A673 (cell line): ENCODE measurements at regions of chr1 and their contacts with region 1.

Region 1: DNA sequence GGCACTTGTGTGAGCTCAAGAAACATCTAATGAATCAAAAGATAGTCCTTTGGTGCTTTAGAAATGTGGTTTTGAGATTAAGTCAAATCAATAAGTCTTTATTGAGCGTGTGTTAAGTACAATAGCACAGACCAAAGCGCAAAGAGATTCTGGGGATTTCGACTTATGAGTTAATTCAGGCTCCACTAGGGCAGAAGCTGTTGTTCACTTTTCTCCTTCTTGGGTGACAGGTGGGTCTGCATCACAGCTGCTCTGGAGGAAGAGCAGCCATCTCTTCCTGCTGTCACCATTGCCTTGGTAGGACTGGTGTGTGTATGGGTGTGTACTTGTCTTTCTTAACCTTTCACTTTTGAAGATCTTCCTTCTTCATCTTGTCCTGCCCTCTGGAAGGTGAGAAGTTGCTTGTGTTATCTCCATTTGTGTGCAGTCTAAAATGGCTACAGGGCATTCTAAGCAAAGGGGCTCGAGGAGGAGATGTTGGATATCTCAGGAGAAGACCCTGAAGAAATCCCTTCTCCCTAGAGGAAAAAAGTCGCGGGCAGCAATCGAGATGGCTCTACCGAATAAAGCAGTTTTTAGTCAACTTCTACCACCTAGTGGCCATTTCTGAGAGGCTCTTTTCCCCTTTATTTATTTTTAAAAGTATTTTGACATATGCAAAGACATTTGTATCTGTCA is 22.9 kb upstream of the DISC1 start:
- DNase-seq: peak; percentile 89
- H3K4me3 ChIP-seq: peak overlapping the region; percentile 45
- H3K27ac ChIP-seq: peak overlapping the region; percentile 1
- H3K4me1 ChIP-seq: no peaks in the 10 kb centered on the region
- H3K27me3 ChIP-seq: no peaks in the 10 kb centered on the region
- CTCF ChIP-seq: peak; percentile 82

Region 2: GRCh38 chr1:230797942-230798418 is 805.8 kb before region 1 on chr1:
- CTCF ChIA-PET with region 1: no interaction called
- POLR2A ChIA-PET with region 1: no interaction called
- intact Hi-C with region 1: loop called (anchors 5 kb)
- DNase-seq: peak; percentile 66
- H3K4me3 ChIP-seq: no peak overlapping the region
- H3K27ac ChIP-seq: no peak overlapping the region
- H3K4me1 ChIP-seq: no peaks in the 10 kb centered on the region
- H3K27me3 ChIP-seq: no peaks in the 10 kb centered on the region
- CTCF ChIP-seq: peak; percentile 70

Region 3: GRCh38 chr1:230917284-230918135 is 686.2 kb before region 1 on chr1:
- CTCF ChIA-PET with region 1: no interaction called
- POLR2A ChIA-PET with region 1: no interaction called
- intact Hi-C with region 1: loop called (anchors 10 kb)
- DNase-seq: peak; percentile 86
- H3K4me3 ChIP-seq: no peak overlapping the region
- H3K27ac ChIP-seq: no peak overlapping the region
- H3K4me1 ChIP-seq: peaks cover 10% of the 10 kb centered on the region
- H3K27me3 ChIP-seq: no peaks in the 10 kb centered on the region
- CTCF ChIP-seq: peak; percentile 84

Region 4: DNA sequence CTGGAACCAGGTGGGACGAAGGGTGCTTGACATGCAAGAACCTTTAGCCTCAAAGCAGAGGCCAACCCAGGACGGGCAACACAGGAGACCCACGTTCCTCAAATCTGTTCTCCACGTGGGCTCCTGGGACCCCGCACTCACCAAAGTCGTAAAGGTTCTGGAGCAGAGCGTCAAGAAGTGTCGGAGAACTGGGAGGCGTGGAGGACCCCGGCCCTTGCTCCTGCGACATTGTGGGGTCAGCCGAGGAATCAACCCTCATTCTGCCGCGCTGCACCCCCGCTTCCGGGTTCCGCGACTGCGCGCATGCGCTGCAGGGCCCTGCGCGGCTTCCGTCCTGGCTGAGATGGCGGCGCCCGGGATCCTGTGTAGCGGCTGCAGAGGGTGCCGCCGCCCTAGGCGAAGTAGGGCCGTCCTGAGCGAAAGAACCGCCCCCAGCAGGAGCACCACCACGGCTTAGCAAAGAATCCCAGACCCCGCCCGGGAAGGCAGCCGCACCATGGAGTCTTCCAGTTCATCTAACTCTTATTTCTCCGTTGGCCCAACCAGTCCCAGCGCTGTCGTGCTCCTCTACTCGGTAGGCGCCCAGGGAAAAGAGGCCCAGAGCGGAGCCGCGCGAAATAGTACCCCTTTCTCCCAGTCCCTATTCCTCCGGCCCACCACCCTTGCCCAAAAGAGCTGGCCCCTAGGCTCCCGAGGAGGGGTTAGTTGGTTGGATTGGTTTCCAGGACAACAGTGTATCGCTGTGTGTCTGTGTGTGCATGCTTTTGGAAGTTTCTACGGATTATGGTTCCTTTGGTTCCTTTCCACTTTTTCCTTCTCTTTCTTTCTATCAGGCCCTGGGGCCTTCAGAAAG is 362.6 kb before region 1 on chr1 and contains the start of gene GNPAT:
- CTCF ChIA-PET with region 1: no interaction called
- POLR2A ChIA-PET with region 1: no interaction called
- intact Hi-C with region 1: loop called (anchors 10 kb)
- DNase-seq: peak; percentile 92
- H3K4me3 ChIP-seq: peak within 1 kb of the TSS; percentile 62
- H3K27ac ChIP-seq: peak within 1 kb of the TSS; percentile 80
- H3K4me1 ChIP-seq: peaks cover 7% of the 10 kb centered on the region
- H3K27me3 ChIP-seq: no peaks in the 10 kb centered on the region
- CTCF ChIP-seq: no peak
- total RNA-seq, gene GNPAT: 73.7 and 75.0 TPM in 2 replicates

Region 5: GRCh38 chr1:231421993-231422764 is 181.6 kb before region 1 on chr1 and contains the start of gene EGLN1:
- CTCF ChIA-PET with region 1: no interaction called
- POLR2A ChIA-PET with region 1: no interaction called
- intact Hi-C with region 1: loop called (anchors 5 kb)
- DNase-seq: peak; percentile 91
- H3K4me3 ChIP-seq: peak within 1 kb of the TSS; percentile 80
- H3K27ac ChIP-seq: peak within 1 kb of the TSS; percentile 90
- H3K4me1 ChIP-seq: peaks cover 27% of the 10 kb centered on the region
- H3K27me3 ChIP-seq: no peaks in the 10 kb centered on the region
- CTCF ChIP-seq: peak; percentile 35
- total RNA-seq, gene EGLN1: 29.5 and 30.4 TPM in 2 replicates